ENCODE measurements at regions of chr16 and their contacts with region 1.

Region 1: DNA sequence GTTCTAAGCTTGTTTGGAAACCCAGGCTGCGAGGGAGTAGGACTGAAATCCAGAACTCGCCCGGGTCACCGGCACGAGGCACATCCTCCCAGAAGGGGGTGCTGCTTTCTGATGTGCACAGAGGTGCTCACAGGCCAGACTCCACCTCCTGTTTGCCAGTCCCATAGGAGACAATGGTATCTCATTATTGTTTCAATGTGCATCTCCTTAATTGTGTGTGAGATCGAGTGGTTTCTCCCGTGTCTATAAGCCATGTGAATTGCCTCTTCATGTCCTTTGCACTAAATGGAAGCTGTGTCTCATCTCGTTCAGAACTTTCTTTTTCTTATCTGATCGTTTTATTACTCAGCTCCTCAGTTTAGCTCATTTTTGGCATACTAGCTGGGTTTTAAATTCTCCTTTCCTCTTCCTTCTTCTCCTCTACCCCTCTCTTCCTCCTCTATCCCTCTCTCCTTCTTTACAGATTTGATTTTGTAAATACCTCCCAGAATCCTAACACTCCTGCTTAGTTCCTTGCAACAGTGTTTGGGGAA is 32.1 kb upstream of the PRKCB start:
- DNase-seq: peak; percentile 64 to 66 (median 66)
- H3K4me3 ChIP-seq: peak overlapping the region in 3 of 7 experiments; percentile 9 to 58 (median 42)
- H3K27ac ChIP-seq: no peak overlapping the region
- H3K4me1 ChIP-seq: peaks cover 2 to 24% (median 10%) of the 10 kb centered on the region in 4 experiments
- H3K27me3 ChIP-seq: no peaks in the 10 kb centered on the region

Region 2: DNA sequence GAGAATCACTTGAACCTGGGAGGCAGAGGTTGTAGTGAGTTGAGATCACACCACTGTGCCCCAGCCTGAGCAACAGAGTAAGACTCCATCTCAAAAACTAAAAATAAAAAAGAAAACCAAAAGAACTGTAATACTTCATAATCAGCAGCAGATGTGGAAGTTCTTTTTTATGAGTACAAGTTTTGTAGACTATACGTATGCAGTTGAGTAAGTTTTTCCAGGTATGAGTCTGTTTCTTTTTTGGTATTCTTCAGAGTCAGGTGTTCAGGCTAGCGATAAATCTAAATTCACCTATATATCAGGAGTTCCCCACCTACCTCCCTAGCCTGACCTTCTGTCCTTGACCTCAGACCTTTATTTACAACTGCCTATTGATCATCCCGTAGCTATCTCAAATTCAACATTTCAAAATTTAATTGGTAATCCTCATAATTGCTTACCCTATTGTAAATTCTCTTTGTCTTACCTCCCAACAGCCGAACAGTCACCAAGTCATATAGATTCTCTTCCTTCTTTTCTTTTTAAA is 151.7 kb before region 1 on chr16:
- CTCF ChIA-PET with region 1: no interaction called
- POLR2A ChIA-PET with region 1: no interaction called
- DNase-seq: no peak
- H3K4me3 ChIP-seq: no peak overlapping the region
- H3K27ac ChIP-seq: no peak overlapping the region
- H3K4me1 ChIP-seq: no peaks in the 10 kb centered on the region
- H3K27me3 ChIP-seq: no peaks in the 10 kb centered on the region

Region 3: DNA sequence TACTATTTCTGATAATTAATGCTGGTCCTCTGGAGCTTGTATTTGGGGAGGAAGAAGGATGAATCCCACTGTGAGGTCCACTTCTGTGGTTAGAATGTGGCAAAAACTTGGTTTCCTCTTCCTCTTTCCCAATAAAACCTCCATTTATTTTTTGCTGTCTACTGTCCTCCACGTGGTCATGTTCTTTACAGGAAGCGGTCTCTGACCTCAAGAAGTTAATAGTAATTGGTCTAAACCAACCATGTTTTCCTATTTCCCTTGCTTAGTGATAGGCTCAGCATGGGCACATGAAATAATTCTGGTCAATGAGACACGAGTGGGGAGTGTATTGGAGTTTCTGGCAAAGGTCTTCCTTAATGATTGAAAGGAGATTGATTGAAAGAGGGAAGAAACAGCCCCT is 15.0 kb before region 1 on chr16:
- CTCF ChIA-PET with region 1: no interaction called
- POLR2A ChIA-PET with region 1: no interaction called
- DNase-seq: peak in 1 of 3 donors; percentile 1
- H3K4me3 ChIP-seq: no peak overlapping the region
- H3K27ac ChIP-seq: no peak overlapping the region
- H3K4me1 ChIP-seq: peaks cover 0 to 19% (median 9%) of the 10 kb centered on the region in 4 experiments
- H3K27me3 ChIP-seq: no peaks in the 10 kb centered on the region

Region 4: DNA sequence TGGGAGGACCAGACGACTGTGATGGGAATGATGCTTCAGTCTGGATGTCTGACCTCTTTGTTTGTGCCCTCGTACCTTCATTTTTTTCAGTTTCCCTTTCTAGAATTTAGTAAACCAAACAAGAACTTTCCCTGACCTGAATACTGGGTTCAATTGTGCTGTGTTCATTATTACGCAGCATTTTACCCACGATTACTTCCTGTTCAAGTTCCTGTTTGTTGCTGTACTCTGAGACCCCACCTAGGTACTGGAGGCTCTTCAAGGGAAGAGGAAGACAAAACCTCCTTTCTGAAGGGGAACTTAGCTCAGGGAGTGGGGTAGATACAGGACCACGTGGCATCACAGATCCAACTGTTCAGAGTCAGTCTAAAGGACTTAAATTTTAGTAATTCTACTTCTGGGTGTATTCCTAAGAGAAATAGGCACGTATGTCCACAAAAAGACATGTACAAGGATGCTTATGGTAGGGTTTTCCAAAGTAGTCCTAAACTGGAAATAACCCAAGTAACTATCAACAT is 22.9 kb after region 1 on chr16:
- CTCF ChIA-PET with region 1: interaction called, 13 read pairs
- POLR2A ChIA-PET with region 1: interaction called, 3 read pairs
- DNase-seq: peak; percentile 94 to 97 (median 96)
- H3K4me3 ChIP-seq: peak overlapping the region in 3 of 7 experiments; percentile 19 to 58 (median 54)
- H3K27ac ChIP-seq: peak overlapping the region; percentile 29 to 66
- H3K4me1 ChIP-seq: peaks cover 19 to 21% (median 19%) of the 10 kb centered on the region in 4 experiments
- H3K27me3 ChIP-seq: no peaks in the 10 kb centered on the region

Region 5: GRCh38 chr16:23842137-23842600 is 38.5 kb after region 1 on chr16:
- CTCF ChIA-PET with region 1: interaction called, 11 read pairs
- POLR2A ChIA-PET with region 1: no interaction called
- DNase-seq: no peak
- H3K4me3 ChIP-seq: no peak overlapping the region
- H3K27ac ChIP-seq: no peak overlapping the region
- H3K4me1 ChIP-seq: peaks cover 4 to 11% (median 10%) of the 10 kb centered on the region in 4 experiments
- H3K27me3 ChIP-seq: no peaks in the 10 kb centered on the region

Region 6: DNA sequence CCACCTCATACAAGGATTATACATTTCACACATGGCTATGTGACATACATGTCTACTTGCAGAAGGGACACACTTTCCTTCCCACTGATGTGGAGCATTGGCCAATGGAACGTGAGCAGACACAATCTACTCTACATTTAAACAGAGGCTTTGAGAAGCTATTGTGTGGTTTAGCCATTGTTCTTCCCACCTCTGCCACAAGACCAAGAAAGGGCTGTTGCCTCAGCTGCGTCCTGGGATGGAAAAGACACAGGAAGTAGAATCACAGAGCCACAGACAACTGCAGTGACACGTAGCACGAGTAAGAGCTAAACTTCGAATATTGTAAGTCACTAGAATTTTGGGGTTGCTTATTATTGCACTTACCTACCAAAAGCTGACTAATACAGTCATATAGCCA is 65.4 kb after region 1 on chr16:
- CTCF ChIA-PET with region 1: interaction called, 10 read pairs
- POLR2A ChIA-PET with region 1: no interaction called
- DNase-seq: no peak
- H3K4me3 ChIP-seq: no peak overlapping the region
- H3K27ac ChIP-seq: no peak overlapping the region
- H3K4me1 ChIP-seq: peaks cover 31 to 65% (median 50%) of the 10 kb centered on the region in 4 experiments
- H3K27me3 ChIP-seq: no peaks in the 10 kb centered on the region

Region 7: DNA sequence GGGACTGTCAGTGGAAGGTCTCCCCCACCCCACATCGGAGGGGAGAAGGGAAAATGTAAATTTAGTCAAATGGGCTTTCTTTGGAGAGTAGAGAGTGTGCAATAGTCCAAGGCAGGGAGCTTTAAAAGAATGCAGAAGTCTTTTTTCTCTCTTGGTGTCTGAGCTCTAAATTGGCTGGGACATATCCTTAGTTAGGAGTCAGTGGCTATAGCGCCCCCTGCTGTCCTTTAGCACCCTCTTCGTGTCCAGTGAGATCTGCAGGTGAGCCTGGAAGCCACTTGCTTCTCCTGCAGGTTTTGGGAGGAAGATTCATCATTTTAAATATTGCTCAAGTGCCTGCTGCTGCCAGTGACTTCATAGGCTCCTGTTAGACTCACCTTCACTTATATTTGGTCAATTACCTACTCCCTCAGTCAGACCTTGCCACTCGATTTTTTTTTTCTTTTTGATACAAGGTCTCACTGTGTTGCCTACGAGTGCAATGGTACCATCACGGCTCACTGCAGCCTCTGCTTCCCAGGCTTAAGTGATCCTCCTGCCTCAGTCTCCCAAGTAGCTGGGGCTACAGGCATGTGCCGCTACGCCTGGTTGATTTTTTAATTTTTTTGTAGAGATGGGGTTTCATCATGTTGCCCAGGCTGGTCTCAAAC is 206.9 kb after region 1 on chr16:
- CTCF ChIA-PET with region 1: interaction called, 100 read pairs
- POLR2A ChIA-PET with region 1: no interaction called
- DNase-seq: peak; percentile 93 to 96 (median 94)
- H3K4me3 ChIP-seq: no peak overlapping the region
- H3K27ac ChIP-seq: no peak overlapping the region
- H3K4me1 ChIP-seq: peaks cover 20 to 68% (median 50%) of the 10 kb centered on the region in 4 experiments
- H3K27me3 ChIP-seq: no peaks in the 10 kb centered on the region

Region 8: GRCh38 chr16:24036614-24037013 is 233.0 kb after region 1 on chr16:
- CTCF ChIA-PET with region 1: interaction called, 58 read pairs
- POLR2A ChIA-PET with region 1: no interaction called
- DNase-seq: peak; percentile 39 to 56 (median 52)
- H3K4me3 ChIP-seq: no peak overlapping the region
- H3K27ac ChIP-seq: no peak overlapping the region
- H3K4me1 ChIP-seq: peaks cover 4 to 31% (median 25%) of the 10 kb centered on the region in 4 experiments
- H3K27me3 ChIP-seq: no peaks in the 10 kb centered on the region

Measured in common myeloid progenitor, CD34-positive (primary cell).